Activated CD8-positive, alpha-beta T cell treated with anti-CD3 and anti-CD28 coated beads, Interleukin-2, amount 10 ng/mL, durations not matched to agents 7 days and 5 days (primary cell): ENCODE measurements at regions of chr17 and their contacts with region 1.

Region 1: GRCh38 chr17:28902819-28903545 is at the start of gene DHRS13:
- DNase-seq: peak; percentile 94
- ATAC-seq: peak; percentile 95
- H3K4me3 Mint-ChIP-seq: peak within 1 kb of the TSS; percentile 88
- H3K27ac Mint-ChIP-seq: peak within 1 kb of the TSS; percentile 86
- H3K4me1 Mint-ChIP-seq: peaks cover 36% of the 10 kb centered on the region
- H3K27me3 Mint-ChIP-seq: no peaks in the 10 kb centered on the region
- total RNA-seq, gene DHRS13: 29.2 to 29.3 TPM

Region 2: DNA sequence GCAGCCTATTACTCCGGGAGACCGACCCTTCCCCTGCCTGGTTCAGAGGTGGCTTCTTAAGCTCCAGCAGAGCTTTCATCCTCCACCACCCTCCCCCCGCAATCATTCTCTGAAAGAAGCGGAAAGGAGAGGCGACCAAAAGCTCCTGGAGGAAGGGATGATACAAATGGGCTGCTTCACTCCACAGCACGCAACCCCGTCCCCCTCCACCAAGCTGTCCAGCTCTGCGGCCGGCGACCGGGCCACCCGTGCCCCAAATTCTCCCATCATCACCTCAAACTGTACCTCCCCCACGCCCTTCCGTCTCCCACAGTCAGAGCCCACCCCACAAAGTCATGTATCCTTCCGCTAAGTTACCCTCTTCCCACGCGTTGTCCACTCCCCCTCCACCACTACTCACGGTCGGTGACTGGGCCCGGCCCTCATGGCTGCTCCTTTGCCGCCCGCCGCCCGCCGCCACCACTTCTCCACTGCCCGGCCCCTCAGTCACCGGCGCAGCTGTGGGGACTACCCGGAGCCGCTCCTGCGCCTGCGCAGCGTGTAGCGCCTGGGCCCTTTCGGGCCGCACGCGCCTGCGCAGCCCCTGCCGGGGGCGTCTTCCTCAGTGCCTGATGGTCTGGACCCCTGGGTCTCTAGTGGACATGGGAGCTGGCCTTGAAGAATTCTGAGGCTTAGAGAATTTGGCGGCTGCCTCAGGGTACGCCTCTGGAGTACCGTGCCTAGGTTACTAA is 60.5 kb before region 1 on chr17 and contains the start of gene FAM222B:
- CTCF ChIA-PET with region 1: interaction called, 16 read pairs
- POLR2A ChIA-PET with region 1: interaction called, 7 read pairs
- DNase-seq: peak; percentile 90
- ATAC-seq: peak; percentile 99
- H3K4me3 Mint-ChIP-seq: peak within 1 kb of the TSS; percentile 100
- H3K27ac Mint-ChIP-seq: peak within 1 kb of the TSS; percentile 97
- H3K4me1 Mint-ChIP-seq: peaks cover 28% of the 10 kb centered on the region
- H3K27me3 Mint-ChIP-seq: no peaks in the 10 kb centered on the region
- total RNA-seq, gene FAM222B: 15.4 to 17.1 TPM

Region 3: GRCh38 chr17:28849281-28849680 is 53.7 kb before region 1 on chr17:
- CTCF ChIA-PET with region 1: interaction called, 13 read pairs
- POLR2A ChIA-PET with region 1: no interaction called
- DNase-seq: peak; percentile 32
- ATAC-seq: peak; percentile 53
- H3K4me3 Mint-ChIP-seq: no peak overlapping the region
- H3K27ac Mint-ChIP-seq: no peak overlapping the region
- H3K4me1 Mint-ChIP-seq: peaks cover 10% of the 10 kb centered on the region
- H3K27me3 Mint-ChIP-seq: no peaks in the 10 kb centered on the region

Region 4: GRCh38 chr17:28871056-28871579 is 31.9 kb before region 1 on chr17:
- CTCF ChIA-PET with region 1: interaction called, 14 read pairs
- POLR2A ChIA-PET with region 1: interaction called, 11 read pairs
- DNase-seq: peak; percentile 76
- ATAC-seq: peak; percentile 99
- H3K4me3 Mint-ChIP-seq: no peak overlapping the region
- H3K27ac Mint-ChIP-seq: peak overlapping the region; percentile 97
- H3K4me1 Mint-ChIP-seq: peaks cover 16% of the 10 kb centered on the region
- H3K27me3 Mint-ChIP-seq: no peaks in the 10 kb centered on the region

Region 5: DNA sequence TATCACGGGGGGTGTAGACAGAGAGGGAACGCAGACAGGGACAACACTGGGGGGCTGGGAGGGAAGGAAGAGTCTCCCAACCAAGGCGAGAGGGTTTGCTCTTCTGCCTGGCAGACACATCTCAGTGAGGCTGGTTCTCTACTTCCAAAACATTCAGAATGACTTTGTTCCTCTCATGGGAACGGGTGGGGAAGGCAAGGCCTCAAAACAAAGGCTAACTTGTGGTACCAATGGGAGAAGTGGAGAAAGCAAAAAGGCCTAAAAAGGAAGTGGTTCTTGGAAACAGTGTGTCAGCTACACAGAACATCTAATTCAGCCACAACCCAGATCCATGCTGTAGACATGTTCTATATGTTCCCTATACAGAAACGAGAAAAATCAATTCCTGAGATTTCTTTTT is 13.0 kb before region 1 on chr17:
- CTCF ChIA-PET with region 1: interaction called, 39 read pairs
- POLR2A ChIA-PET with region 1: interaction called, 13 read pairs
- DNase-seq: no peak
- ATAC-seq: peak; percentile 31
- H3K4me3 Mint-ChIP-seq: peak overlapping the region; percentile 32
- H3K27ac Mint-ChIP-seq: peak overlapping the region; percentile 70
- H3K4me1 Mint-ChIP-seq: peaks cover 58% of the 10 kb centered on the region
- H3K27me3 Mint-ChIP-seq: no peaks in the 10 kb centered on the region

Region 6: DNA sequence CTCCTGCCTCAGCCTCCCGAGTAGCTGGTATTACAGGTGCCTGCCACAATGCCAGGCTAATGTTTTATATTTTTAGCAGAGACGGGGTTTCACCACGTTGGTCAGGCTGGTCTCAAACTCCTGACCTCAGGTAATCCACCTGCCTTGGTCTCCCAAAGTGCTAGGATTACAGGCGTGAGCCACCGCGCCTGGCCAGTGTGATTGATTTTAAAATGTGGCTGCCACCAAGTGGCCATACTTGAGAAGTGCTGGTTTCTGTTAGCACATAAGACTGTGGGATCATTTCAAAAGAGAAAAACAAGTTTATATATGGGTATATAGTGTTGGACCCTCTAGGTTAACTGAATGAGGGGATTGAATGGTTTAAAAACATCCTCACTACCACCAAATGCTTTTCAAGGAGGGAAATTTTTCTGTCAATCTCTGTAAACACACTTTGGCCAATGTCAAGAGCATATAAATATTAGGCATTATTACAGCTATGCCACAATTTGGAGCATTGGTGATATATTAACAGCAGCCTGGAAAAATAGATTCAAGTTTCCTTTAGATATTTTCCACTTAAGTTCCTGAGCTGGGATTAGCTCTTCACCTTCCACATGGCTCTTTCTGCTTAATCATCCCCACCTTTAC is 13.4 kb after region 1 on chr17:
- CTCF ChIA-PET with region 1: interaction called, 25 read pairs
- POLR2A ChIA-PET with region 1: interaction called, 3 read pairs
- DNase-seq: peak; percentile 54
- ATAC-seq: peak; percentile 74
- H3K4me3 Mint-ChIP-seq: no peak overlapping the region
- H3K27ac Mint-ChIP-seq: no peak overlapping the region
- H3K4me1 Mint-ChIP-seq: no peaks in the 10 kb centered on the region
- H3K27me3 Mint-ChIP-seq: no peaks in the 10 kb centered on the region

Region 7: GRCh38 chr17:28985950-28986713 is 83.2 kb after region 1 on chr17:
- CTCF ChIA-PET with region 1: no interaction called
- POLR2A ChIA-PET with region 1: no interaction called
- DNase-seq: no peak
- ATAC-seq: no peak
- H3K4me3 Mint-ChIP-seq: no peak overlapping the region
- H3K27ac Mint-ChIP-seq: no peak overlapping the region
- H3K4me1 Mint-ChIP-seq: peaks cover 27% of the 10 kb centered on the region
- H3K27me3 Mint-ChIP-seq: peaks cover 3% of the 10 kb centered on the region

Region 8: GRCh38 chr17:29038085-29038795 is 135.3 kb after region 1 on chr17:
- CTCF ChIA-PET with region 1: no interaction called
- POLR2A ChIA-PET with region 1: no interaction called
- DNase-seq: no peak
- ATAC-seq: no peak
- H3K4me3 Mint-ChIP-seq: no peak overlapping the region
- H3K27ac Mint-ChIP-seq: no peak overlapping the region
- H3K4me1 Mint-ChIP-seq: peaks cover 8% of the 10 kb centered on the region
- H3K27me3 Mint-ChIP-seq: peaks cover 25% of the 10 kb centered on the region

Region 9: DNA sequence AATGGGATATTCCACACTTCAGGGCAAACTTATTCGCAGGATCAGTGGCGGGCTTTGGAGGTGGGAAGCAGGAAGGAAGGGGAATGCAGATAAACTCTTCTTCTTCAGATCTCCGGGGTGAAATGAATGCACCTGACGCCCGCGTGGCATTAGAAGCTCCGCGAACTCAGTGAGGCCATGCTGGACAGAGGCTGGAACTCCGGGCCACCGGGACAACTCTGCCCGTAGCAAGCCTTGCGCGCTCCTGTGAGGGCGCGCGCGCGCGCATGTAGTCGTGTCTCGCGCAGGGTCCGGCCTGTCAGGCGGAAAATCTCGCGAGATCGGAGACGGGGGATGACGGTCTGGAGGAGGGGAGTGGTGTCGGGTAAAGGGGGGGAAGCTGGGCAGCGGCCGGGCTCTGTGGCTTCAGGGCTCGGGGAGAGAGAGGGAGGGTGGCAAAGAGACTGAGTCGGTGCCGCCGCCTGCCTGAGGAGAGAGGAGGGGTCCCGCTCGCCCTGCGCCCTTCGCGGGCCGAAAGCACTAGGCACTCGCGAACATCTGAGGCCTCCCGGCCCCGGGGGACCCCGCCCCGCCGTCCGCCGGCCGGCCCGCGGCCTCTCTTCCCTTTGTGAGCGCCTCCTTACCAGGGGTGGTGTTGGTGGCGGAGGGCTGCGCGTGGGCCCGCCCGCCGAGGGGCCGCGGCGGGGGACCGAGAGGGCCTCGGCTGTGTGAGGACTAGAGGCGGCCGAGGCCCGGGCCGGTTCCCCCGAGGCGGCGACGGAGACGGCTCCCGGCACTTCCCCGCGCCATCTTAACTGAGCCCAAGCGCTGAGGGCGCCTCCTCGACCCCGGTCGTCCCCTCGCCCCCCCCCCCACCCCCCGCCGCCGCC is 487.2 kb after region 1 on chr17 and contains the start of gene TAOK1:
- CTCF ChIA-PET with region 1: no interaction called
- POLR2A ChIA-PET with region 1: no interaction called
- DNase-seq: peak; percentile 99
- ATAC-seq: peak; percentile 96
- H3K4me3 Mint-ChIP-seq: peak within 1 kb of the TSS; percentile 91
- H3K27ac Mint-ChIP-seq: peak within 1 kb of the TSS; percentile 92
- H3K4me1 Mint-ChIP-seq: peaks cover 40% of the 10 kb centered on the region
- H3K27me3 Mint-ChIP-seq: no peaks in the 10 kb centered on the region
- total RNA-seq, gene TAOK1: 51.7 to 53.0 TPM